Right cardiac atrium (tissue), 5 donors: ENCODE measurements at regions of chr19 and their contacts with region 1.

Region 1: DNA sequence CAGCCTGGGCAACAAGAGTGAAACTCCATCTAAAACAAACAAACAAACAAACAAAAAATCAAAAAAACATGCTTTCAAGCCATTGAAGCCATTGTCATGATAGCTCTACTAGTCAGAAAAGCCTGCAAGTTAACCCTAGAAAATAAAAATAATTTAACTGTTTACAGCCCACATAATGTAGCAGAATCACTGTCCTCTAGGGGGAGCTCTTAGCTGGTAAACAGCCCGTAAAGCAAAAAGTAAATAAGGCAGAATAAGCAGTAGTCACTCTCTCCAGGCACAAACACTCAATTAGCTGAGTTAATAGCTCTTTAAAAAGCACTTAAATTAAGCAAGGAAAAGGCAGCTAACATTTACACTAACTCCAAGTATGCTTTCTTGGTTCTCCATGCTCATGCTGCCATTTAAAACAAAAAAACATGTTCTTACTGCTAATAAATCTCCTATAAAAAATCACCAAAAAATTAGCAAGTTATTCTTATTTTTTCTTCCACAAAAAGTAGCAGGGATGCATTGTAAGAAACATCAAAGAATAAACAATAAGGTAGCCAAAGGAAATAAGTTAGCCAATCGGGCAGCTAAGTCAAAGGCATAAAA is 11.3 kb downstream of the LILRB4 start:
- DNase-seq: no peak
- ATAC-seq: no peak
- H3K4me3 ChIP-seq: no peak overlapping the region
- H3K27ac ChIP-seq: no peak overlapping the region
- H3K4me1 ChIP-seq: no peaks in the 10 kb centered on the region
- H3K27me3 ChIP-seq: no peaks in the 10 kb centered on the region

Region 2: DNA sequence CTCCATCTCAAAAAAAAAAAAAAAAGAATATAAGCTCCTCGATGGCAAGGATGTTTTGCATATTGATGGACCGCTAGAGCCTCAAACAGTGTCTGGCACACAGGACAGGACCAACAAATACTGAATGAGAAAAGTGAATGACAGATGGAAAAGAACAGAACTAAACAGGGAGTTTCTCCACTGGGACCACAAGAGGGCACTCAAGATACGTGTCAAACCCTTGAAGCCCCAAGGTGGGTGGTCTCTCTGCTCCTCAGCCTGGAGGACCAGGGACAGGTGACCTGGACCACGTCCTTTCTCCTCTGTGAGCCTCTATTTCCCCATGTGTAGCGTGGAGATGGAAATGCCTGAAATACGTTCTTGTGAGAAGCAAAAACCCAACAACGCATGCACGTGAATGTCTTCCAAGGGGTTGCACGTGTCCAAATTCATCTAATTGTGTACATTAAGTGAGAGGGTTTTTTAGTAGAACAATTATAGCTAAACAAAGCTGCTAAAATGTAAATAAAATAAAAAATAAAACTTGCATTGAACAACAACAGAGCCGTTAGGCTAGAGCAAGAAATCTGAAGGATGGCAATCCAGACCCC is 195.3 kb before region 1 on chr19:
- intact Hi-C with region 1: loop called in 1 of 4 experiments (anchors 10 kb)
- DNase-seq: no peak
- ATAC-seq: peak in 1 of 2 donors; percentile 26
- H3K4me3 ChIP-seq: no peak overlapping the region
- H3K27ac ChIP-seq: no peak overlapping the region
- H3K4me1 ChIP-seq: no peaks in the 10 kb centered on the region
- H3K27me3 ChIP-seq: no peaks in the 10 kb centered on the region